Activated naive CD4-positive, alpha-beta T cell treated with anti-CD3 and anti-CD28 coated beads for 36 hours (primary cell): ENCODE measurements at regions of chr1 and their contacts with region 1.

Region 1: GRCh38 chr1:71068325-71069240 is 12.3 kb downstream of the ZRANB2 start:
- DNase-seq: no peak
- H3K4me3 Mint-ChIP-seq: no peak overlapping the region
- H3K27ac Mint-ChIP-seq: no peak overlapping the region
- H3K4me1 Mint-ChIP-seq: peaks cover 4% of the 10 kb centered on the region
- H3K27me3 Mint-ChIP-seq: no peaks in the 10 kb centered on the region

Region 2: DNA sequence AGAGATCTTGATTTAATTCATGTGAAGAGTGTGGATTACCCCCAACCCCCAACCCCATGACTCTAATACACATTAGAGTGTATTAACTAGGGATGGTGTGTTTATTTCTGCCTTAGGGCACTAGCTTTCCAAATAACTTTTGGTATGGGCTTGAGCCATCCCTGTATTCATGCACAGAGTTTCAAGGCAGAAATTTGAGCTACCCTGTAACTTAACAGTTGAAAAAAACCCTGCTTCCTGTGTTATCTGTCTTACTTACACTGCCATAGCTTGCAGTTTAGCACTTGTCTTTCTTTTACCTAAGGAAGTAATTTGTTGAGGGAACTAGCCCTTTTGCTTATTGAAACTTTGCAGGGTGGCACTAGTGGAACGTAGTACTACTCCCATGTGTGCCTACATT is 841.1 kb before region 1 on chr1:
- CTCF ChIA-PET with region 1: no interaction called
- intact Hi-C with region 1: loop called (anchors 5 kb)
- DNase-seq: no peak
- H3K4me3 Mint-ChIP-seq: no peak overlapping the region
- H3K27ac Mint-ChIP-seq: peak overlapping the region; percentile 38
- H3K4me1 Mint-ChIP-seq: peaks cover 48% of the 10 kb centered on the region
- H3K27me3 Mint-ChIP-seq: no peaks in the 10 kb centered on the region

Region 3: GRCh38 chr1:71116729-71117128 is 48.1 kb after region 1 on chr1:
- CTCF ChIA-PET with region 1: no interaction called
- intact Hi-C with region 1: no loop called
- DNase-seq: no peak
- H3K4me3 Mint-ChIP-seq: no peak overlapping the region
- H3K27ac Mint-ChIP-seq: no peak overlapping the region
- H3K4me1 Mint-ChIP-seq: no peaks in the 10 kb centered on the region
- H3K27me3 Mint-ChIP-seq: peaks cover 11% of the 10 kb centered on the region